ENCODE measurements at regions of chr10 and their contacts with region 1.

Region 1: DNA sequence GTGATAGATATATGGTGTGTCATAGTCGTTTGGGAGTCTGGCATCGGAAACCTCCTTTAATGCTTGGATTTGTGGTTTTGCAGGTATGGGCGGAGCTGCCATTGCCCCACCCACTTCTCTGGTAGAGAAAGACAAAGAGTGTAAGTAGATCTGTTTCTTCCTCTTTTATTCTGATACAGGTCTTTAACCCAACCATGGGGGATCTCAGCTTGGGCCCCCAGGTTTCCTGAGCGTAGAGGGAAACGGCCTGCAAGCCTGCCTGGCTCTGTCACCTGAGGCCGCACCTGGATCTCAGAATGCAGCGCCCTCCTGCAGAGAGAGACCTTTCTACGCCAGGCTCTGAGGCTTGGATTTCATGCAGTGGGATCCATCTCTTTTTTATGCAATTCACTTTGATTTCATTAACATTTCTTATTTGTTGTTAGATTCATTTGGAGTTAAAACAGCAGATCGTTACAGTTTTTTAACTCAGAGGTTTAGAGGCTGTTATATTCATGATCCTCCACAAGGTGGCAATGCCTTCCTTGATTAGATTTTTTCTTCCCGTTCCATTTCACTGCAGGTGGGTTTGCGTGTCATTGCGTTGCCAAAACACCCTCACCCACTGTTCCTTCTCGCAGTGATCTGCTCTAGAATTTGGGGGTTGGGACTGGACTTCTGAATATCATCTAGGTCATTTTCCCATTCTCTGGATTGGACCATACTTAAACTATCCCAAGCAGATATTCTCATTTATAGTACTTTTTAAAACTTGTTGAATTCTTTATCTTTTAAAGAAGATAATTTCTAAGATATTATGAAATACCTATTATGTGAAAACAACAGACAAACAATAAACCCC is 20.0 kb downstream of the RBM17 start:
- DNase-seq: peak in 6 of 14 experiments; percentile 17 to 83 (median 59)
- ATAC-seq: peak; percentile 86
- H3K4me3 ChIP-seq: peak overlapping the region; percentile 9
- H3K4me3 Mint-ChIP-seq: peak overlapping the region; percentile 57
- H3K27ac ChIP-seq: no peak overlapping the region
- H3K27ac Mint-ChIP-seq: peak overlapping the region; percentile 43
- H3K4me1 ChIP-seq: peaks cover 19% of the 10 kb centered on the region
- H3K4me1 Mint-ChIP-seq: peaks cover 35% of the 10 kb centered on the region
- H3K27me3 ChIP-seq: no peaks in the 10 kb centered on the region
- H3K27me3 Mint-ChIP-seq: no peaks in the 10 kb centered on the region
- CTCF ChIP-seq: peak; percentile 91

Region 2: DNA sequence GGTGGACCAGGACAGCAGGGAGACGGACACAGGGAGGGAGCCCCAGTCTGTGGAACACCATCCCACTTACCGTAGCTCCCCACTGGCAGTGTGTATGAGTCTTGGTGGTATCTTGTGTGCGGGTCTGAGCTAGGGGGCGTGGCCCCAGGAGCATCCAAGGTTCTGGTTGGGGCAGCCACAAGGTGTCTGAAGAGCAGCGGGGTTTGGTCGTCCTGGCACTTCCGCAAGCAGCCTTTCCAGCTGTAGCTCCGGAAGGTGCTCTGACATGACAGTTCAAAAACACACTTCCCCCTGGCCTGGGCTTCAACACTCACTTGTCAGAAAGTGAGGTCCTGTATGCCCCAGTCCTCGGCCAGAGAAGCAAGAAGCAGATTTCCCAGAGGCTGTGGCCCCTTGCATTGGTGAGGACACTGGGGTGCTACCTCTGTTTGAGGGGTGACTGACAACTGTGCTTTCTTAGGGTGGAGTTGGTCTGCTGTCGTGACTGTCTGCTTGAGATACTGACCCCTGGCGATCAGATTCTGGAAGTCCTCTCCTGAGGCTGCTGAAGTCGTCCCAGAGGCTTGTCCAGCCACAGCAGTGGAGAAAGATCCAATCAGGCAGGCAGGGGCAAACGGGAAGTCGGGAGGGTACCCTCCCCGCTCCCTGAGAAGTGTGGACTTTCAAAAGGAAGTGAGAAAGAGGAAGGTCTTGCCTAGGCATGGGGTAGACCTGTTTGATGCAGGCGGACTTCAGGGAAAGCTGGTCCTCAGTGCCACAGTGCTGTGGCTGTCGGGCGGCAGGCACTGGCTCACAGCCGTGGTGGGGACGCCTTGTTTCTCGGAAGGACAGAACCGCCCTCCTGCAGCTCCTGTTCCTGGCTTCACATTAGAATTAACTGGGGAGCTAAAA is 42.5 kb after region 1 on chr10:
- CTCF ChIA-PET with region 1: interaction called, 5 read pairs
- POLR2A ChIA-PET with region 1: no interaction called
- intact Hi-C with region 1: loop called (anchors 2 kb)
- DNase-seq: peak in 8 of 14 experiments; percentile 24 to 84 (median 52)
- ATAC-seq: peak; percentile 68
- H3K4me3 ChIP-seq: peak overlapping the region; percentile 31
- H3K4me3 Mint-ChIP-seq: peak overlapping the region; percentile 85
- H3K27ac ChIP-seq: peak overlapping the region; percentile 1 to 19
- H3K27ac Mint-ChIP-seq: peak overlapping the region; percentile 82
- H3K4me1 ChIP-seq: peaks cover 59% of the 10 kb centered on the region
- H3K4me1 Mint-ChIP-seq: peaks cover 63% of the 10 kb centered on the region
- H3K27me3 ChIP-seq: no peaks in the 10 kb centered on the region
- H3K27me3 Mint-ChIP-seq: no peaks in the 10 kb centered on the region
- CTCF ChIP-seq: peak; percentile 59